HepG2 (cell line): ENCODE measurements at regions of chr5 and their contacts with region 1.

Region 1: DNA sequence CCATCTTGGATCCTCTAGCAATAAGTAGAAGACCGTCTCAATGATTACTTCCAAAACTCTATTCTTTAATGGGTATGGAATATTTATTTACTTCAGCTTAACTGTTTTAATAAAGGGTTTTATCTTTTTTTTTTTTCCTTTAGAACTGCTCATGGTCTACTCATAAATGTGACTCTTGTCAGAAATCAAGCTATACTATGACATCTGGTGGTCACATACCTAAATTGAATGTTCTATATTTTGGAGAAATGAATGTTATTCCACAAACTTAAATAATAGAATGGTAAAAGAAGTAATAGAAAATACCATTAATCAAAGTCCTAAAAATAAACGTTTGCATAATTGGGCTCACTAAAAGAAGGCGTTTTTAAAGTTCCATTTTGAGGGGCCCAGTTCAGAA is 131.2 kb upstream of the PLCXD3 start:
- DNase-seq: no peak
- ATAC-seq: no peak
- H3K4me3 ChIP-seq: no peak overlapping the region
- H3K27ac ChIP-seq: no peak overlapping the region
- H3K4me1 ChIP-seq: peaks cover 35% of the 10 kb centered on the region
- H3K27me3 ChIP-seq: no peaks in the 10 kb centered on the region
- CTCF ChIP-seq: peak; percentile 16; the same call in 1 of the 2 replicates
- EP300 ChIP-seq: no peak
- POLR2A ChIP-seq: no peak
- RAD21 ChIP-seq: no peak

Region 2: GRCh38 chr5:40991168-40991980 is 650.2 kb before region 1 on chr5:
- CTCF ChIA-PET with region 1: no interaction called
- POLR2A ChIA-PET with region 1: no interaction called
- in situ Hi-C with region 1: no loop called
- intact Hi-C with region 1: loop called (anchors 5 kb)
- DNase-seq: peak; percentile 94
- ATAC-seq: peak; percentile 98
- H3K4me3 ChIP-seq: peak overlapping the region in 2 of 3 experiments; percentile 9 to 24; a peak in 1 of 6 replicates
- H3K27ac ChIP-seq: peak overlapping the region; percentile 91
- H3K4me1 ChIP-seq: peaks cover 51% of the 10 kb centered on the region
- H3K27me3 ChIP-seq: no peaks in the 10 kb centered on the region
- CTCF ChIP-seq: no peak
- EP300 ChIP-seq: peak in 1 of 2 experiments; percentile 95; a peak in 2 of 4 replicates
- POLR2A ChIP-seq: no peak
- RAD21 ChIP-seq: no peak

Region 3: GRCh38 chr5:41270423-41271251 is 371.0 kb before region 1 on chr5:
- CTCF ChIA-PET with region 1: interaction called, 7 read pairs
- POLR2A ChIA-PET with region 1: no interaction called
- in situ Hi-C with region 1: loop called (anchors 10 kb)
- intact Hi-C with region 1: loop called (anchors 1 kb)
- DNase-seq: peak; percentile 43
- ATAC-seq: peak; percentile 95
- H3K4me3 ChIP-seq: no peak overlapping the region
- H3K27ac ChIP-seq: no peak overlapping the region
- H3K4me1 ChIP-seq: no peaks in the 10 kb centered on the region
- H3K27me3 ChIP-seq: no peaks in the 10 kb centered on the region; a peak in 1 of 5 replicates
- CTCF ChIP-seq: peak; percentile 76
- EP300 ChIP-seq: no peak
- POLR2A ChIP-seq: no peak
- RAD21 ChIP-seq: peak; percentile 57; the same call in 1 of the 2 replicates

Region 4: DNA sequence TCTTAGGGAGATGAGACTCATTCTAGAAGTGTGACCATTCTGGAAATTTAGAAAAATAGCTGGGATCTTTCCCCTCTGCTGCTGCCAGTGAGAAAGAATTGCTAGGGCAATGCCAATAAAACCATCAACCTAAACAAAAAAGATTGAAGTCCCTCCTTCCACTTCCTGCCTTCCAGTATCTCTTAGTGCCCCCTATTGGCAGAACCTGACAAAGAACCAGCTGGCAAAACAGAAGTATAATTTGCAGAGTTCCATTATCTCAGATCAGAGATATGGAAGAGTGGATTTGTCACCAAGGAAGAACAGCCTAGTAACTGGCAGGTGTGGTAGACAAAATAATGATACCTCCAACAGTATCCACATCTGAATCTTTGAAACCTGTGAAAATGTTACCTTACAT is 117.4 kb before region 1 on chr5:
- CTCF ChIA-PET with region 1: no interaction called
- POLR2A ChIA-PET with region 1: no interaction called
- in situ Hi-C with region 1: no loop called
- intact Hi-C with region 1: loop called (anchors 5 kb)
- DNase-seq: no peak
- ATAC-seq: no peak
- H3K4me3 ChIP-seq: no peak overlapping the region
- H3K27ac ChIP-seq: no peak overlapping the region
- H3K4me1 ChIP-seq: no peaks in the 10 kb centered on the region
- H3K27me3 ChIP-seq: no peaks in the 10 kb centered on the region
- CTCF ChIP-seq: no peak
- EP300 ChIP-seq: no peak
- POLR2A ChIP-seq: no peak
- RAD21 ChIP-seq: no peak

Region 5: DNA sequence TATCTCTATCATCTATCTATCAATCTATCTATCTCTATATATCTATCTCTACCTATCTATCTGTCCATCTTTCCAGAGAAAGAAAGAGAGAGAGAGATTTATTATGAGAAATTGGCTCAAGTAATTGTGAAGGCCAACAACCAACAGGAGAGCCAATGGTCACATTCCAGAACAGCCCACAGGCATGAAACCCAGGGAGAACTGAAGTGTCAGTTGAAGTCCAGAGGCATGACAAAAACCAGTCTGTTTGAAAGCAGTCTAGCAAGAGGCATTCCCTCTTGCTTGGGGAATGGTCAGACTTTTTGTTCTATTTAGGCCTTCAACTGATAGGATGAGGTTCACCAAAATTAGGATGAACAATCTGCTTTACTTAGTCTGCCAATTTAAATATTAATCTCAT is 43.6 kb before region 1 on chr5:
- CTCF ChIA-PET with region 1: no interaction called
- POLR2A ChIA-PET with region 1: no interaction called
- in situ Hi-C with region 1: no loop called
- intact Hi-C with region 1: no loop called
- DNase-seq: no peak
- ATAC-seq: no peak
- H3K4me3 ChIP-seq: no peak overlapping the region
- H3K27ac ChIP-seq: no peak overlapping the region
- H3K4me1 ChIP-seq: no peaks in the 10 kb centered on the region
- H3K27me3 ChIP-seq: no peaks in the 10 kb centered on the region
- CTCF ChIP-seq: no peak
- EP300 ChIP-seq: no peak
- POLR2A ChIP-seq: no peak
- RAD21 ChIP-seq: no peak

Region 6: DNA sequence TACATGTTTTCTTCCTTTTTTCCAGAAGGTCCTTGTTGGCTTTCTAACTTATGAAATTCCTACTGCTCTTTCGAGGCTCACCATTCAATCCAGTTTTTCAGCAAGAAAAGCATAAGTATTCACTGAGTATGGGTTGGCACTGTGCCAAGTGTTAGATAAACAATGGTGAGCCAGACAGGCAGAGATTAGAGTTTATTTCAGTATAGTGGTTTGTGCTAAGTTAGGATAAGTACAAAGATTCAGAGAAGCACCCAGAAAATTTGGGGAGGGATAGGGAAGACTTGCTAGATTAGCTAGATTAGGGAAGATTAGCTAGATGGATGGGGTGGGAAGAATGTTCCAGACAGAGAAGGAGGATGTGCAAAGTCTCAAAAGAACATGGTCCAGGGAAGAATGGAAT is 105.7 kb after region 1 on chr5:
- CTCF ChIA-PET with region 1: no interaction called
- POLR2A ChIA-PET with region 1: no interaction called
- in situ Hi-C with region 1: no loop called
- intact Hi-C with region 1: no loop called
- DNase-seq: no peak
- ATAC-seq: no peak
- H3K4me3 ChIP-seq: no peak overlapping the region
- H3K27ac ChIP-seq: no peak overlapping the region
- H3K4me1 ChIP-seq: no peaks in the 10 kb centered on the region
- H3K27me3 ChIP-seq: no peaks in the 10 kb centered on the region; a peak in 1 of 5 replicates
- CTCF ChIP-seq: no peak
- EP300 ChIP-seq: no peak
- POLR2A ChIP-seq: no peak
- RAD21 ChIP-seq: no peak